ENCODE measurements at regions of chr21 and their contacts with region 1.

Region 1: GRCh38 chr21:30340441-30341241 is 3.1 kb upstream of the KRTAP27-1 start:
- DNase-seq: peak; percentile 49 to 63
- H3K4me3 ChIP-seq: no peak overlapping the region
- H3K27ac ChIP-seq: no peak overlapping the region
- H3K4me1 ChIP-seq: no peaks in the 10 kb centered on the region
- H3K27me3 ChIP-seq: no peaks in the 10 kb centered on the region
- CTCF ChIP-seq: peak; percentile 65 to 91 (median 74)
- POLR2A ChIP-seq: no peak

Region 2: GRCh38 chr21:31088315-31088714 is 747.7 kb after region 1 on chr21:
- intact Hi-C with region 1: loop called (anchors 5 kb)
- DNase-seq: peak in 1 of 2 donors; percentile 16
- H3K4me3 ChIP-seq: no peak overlapping the region
- H3K27ac ChIP-seq: no peak overlapping the region
- H3K4me1 ChIP-seq: no peaks in the 10 kb centered on the region
- H3K27me3 ChIP-seq: no peaks in the 10 kb centered on the region
- CTCF ChIP-seq: no peak
- POLR2A ChIP-seq: no peak

Measured in thyroid gland (tissue), 4 donors.